ENCODE measurements at regions of chr5 and their contacts with region 1.

Region 1: DNA sequence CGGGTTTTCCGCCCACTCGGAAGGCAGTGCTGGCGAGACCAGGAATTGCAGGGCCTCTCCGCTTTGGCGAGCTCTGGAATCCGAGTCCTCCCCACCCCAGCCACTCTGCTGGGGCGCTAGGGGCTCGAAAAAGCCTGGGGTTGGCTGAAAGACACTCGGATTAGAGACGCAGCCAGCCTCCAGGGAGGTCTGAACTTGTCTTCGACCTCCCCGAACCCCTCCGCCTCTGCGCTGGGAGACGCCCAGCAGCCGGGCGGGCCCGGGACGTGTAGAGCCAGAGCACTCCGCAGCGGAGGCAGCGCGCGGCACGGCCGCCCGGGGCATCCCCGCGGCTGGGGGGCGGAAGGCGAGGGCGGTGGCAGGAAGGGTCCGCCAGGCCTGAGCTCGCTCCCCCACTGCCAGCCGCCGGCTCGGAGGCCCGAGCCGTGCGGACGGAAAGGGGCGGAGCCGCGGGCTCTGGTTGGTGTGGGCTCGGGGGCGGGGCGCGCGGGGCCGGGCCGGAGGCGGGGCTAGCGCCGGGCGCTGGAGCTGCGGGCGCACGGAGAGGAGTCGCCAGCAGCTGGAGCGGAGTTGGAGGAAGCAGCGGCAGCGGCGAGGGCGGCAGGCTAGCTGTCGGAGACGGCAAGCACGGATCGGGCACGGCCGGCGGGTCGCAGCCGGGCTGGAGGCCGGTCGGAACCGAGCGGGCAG is at the start of gene PIK3R1:
- DNase-seq: peak; percentile 97
- H3K4me3 Mint-ChIP-seq: peak within 1 kb of the TSS; percentile 84
- H3K27ac Mint-ChIP-seq: peak within 1 kb of the TSS; percentile 77
- H3K4me1 Mint-ChIP-seq: peaks cover 25% of the 10 kb centered on the region
- H3K27me3 Mint-ChIP-seq: no peaks in the 10 kb centered on the region
- CTCF ChIP-seq: no peak
- total RNA-seq, gene PIK3R1: 74.8 and 81.5 TPM in 2 replicates

Region 2: GRCh38 chr5:67815455-67816391 is 399.6 kb before region 1 on chr5:
- CTCF ChIA-PET with region 1: no interaction called
- intact Hi-C with region 1: loop called (anchors 10 kb)
- DNase-seq: peak; percentile 64
- H3K4me3 Mint-ChIP-seq: peak overlapping the region; percentile 52
- H3K27ac Mint-ChIP-seq: peak overlapping the region; percentile 89
- H3K4me1 Mint-ChIP-seq: peaks cover 43% of the 10 kb centered on the region
- H3K27me3 Mint-ChIP-seq: no peaks in the 10 kb centered on the region
- CTCF ChIP-seq: no peak

Region 3: DNA sequence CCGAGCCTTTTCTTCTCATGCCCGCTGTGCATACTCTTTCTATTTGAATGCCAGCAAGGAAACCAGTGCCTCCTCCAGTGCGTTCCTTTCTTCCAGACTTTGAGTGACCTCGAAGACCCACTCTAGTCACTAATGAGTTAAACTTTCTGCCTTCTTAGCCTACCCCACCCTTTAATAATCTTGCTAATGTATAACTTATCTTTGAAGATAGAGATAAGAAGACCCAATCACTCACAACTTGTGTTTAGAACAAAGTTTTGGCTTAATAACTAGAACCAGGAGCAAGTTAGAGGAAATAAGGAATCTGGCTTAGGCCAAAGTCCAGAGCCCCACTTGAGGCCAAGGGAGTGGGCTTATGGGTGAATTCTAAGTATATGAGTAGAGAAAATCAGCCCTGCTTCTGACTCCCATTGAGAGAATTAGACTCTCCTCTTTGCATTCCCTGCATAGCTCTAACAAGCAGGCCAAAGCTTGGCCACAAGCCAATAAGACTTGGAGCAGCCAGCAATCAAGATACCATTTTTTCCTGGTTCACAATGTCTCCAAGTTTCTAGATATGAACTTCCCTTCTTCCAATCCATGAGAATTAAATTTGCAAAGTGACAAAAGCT is 181.3 kb before region 1 on chr5:
- CTCF ChIA-PET with region 1: no interaction called
- intact Hi-C with region 1: loop called (anchors 5 kb)
- DNase-seq: peak; percentile 61
- H3K4me3 Mint-ChIP-seq: no peak overlapping the region
- H3K27ac Mint-ChIP-seq: no peak overlapping the region
- H3K4me1 Mint-ChIP-seq: peaks cover 38% of the 10 kb centered on the region
- H3K27me3 Mint-ChIP-seq: no peaks in the 10 kb centered on the region
- CTCF ChIP-seq: no peak

Region 4: DNA sequence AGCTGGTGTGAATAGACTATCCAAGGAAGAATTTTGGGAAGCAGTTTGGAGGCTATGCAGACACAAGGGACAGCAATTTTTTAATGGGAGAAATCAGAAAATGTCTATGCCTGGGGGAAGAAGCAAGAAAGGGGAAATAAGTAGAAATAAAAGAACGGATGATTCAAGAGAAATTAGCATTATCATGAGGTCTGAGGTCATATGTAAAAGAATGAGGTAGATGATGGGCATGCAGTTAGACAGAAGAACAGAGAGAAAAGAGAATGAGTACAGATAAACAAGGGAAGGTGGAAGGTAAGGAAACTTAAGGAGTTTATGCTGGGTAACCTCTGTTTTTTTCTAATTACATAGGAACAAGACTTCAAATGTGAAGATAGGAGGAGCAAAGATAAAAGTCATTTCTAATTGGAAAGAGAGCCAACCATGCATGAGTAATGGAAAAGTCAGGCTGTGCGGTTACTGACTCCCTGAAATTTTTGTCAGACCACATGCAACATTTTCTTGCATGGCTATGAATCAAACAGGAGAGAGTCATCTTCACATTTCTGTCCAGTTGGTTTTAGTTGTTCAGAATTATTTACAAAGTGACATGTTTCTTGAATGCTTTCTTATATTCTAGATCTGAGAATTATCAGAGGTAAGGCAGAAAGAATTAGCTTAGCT is 100.8 kb before region 1 on chr5:
- CTCF ChIA-PET with region 1: no interaction called
- intact Hi-C with region 1: loop called (anchors 5 kb)
- DNase-seq: no peak
- H3K4me3 Mint-ChIP-seq: no peak overlapping the region
- H3K27ac Mint-ChIP-seq: no peak overlapping the region
- H3K4me1 Mint-ChIP-seq: peaks cover 10% of the 10 kb centered on the region
- H3K27me3 Mint-ChIP-seq: no peaks in the 10 kb centered on the region
- CTCF ChIP-seq: no peak